ENCODE measurements at regions of chr16 and their contacts with region 1.

Region 1: GRCh38 chr16:56409195-56409594 is 16.1 kb downstream of the AMFR start:
- DNase-seq: no peak
- H3K4me3 ChIP-seq: no peak overlapping the region
- H3K27ac ChIP-seq: no peak overlapping the region
- H3K27me3 ChIP-seq: no peaks in the 10 kb centered on the region
- CTCF ChIP-seq: no peak

Region 2: GRCh38 chr16:56041686-56042085 is 367.5 kb before region 1 on chr16:
- CTCF ChIA-PET with region 1: no interaction called
- POLR2A ChIA-PET with region 1: no interaction called
- DNase-seq: no peak
- H3K4me3 ChIP-seq: no peak overlapping the region
- H3K27ac ChIP-seq: no peak overlapping the region
- H3K27me3 ChIP-seq: no peaks in the 10 kb centered on the region
- CTCF ChIP-seq: no peak

Region 3: GRCh38 chr16:56475201-56475600 is 66.0 kb after region 1 on chr16:
- CTCF ChIA-PET with region 1: interaction called, 12 read pairs
- POLR2A ChIA-PET with region 1: no interaction called
- DNase-seq: no peak
- H3K4me3 ChIP-seq: no peak overlapping the region
- H3K27ac ChIP-seq: no peak overlapping the region
- H3K27me3 ChIP-seq: no peaks in the 10 kb centered on the region
- CTCF ChIP-seq: no peak